GM23248 (cell line): ENCODE measurements at regions of chr9 and their contacts with region 1.

Region 1: GRCh38 chr9:77440057-77440456 is 208.1 kb downstream of the GNA14 start:
- DNase-seq: peak; percentile 64
- H3K4me3 ChIP-seq: peak overlapping the region; percentile 51
- H3K27ac ChIP-seq: no peak overlapping the region
- H3K4me1 ChIP-seq: no peaks in the 10 kb centered on the region
- H3K27me3 ChIP-seq: no peaks in the 10 kb centered on the region

Region 2: DNA sequence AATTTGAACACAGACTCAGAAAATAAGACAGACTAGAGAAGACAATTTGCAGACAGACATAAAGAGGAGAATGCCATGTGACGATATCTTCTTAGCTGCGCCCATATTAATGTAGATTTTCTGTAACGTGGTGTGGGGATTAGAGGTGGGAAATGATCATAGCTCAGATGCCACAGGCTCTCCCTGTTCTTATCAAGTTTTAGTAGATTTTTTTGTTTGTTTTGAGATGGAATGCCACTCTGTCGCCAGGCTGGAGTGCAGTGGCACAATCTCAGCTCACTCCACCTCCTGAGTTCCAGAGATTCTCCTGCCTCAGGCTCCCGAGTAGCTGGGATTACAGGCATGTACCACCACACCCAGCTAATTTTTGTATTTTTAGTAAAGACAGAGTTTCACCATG is 203.4 kb before region 1 on chr9:
- in situ Hi-C with region 1: no loop called
- DNase-seq: no peak
- H3K4me3 ChIP-seq: no peak overlapping the region
- H3K27ac ChIP-seq: no peak overlapping the region
- H3K4me1 ChIP-seq: no peaks in the 10 kb centered on the region
- H3K27me3 ChIP-seq: no peaks in the 10 kb centered on the region

Region 3: GRCh38 chr9:78035383-78035993 is 595.4 kb after region 1 on chr9:
- in situ Hi-C with region 1: loop called (anchors 10 kb)
- DNase-seq: peak; percentile 84
- H3K4me3 ChIP-seq: peak overlapping the region; percentile 28; the same call in 1 of the 2 replicates
- H3K27ac ChIP-seq: peak overlapping the region; percentile 21
- H3K4me1 ChIP-seq: peaks cover 9% of the 10 kb centered on the region; the same call in 1 of the 2 replicates
- H3K27me3 ChIP-seq: no peaks in the 10 kb centered on the region